Activated CD4-positive, alpha-beta T cell treated with anti-CD3 and anti-CD28 coated beads, Interleukin-2, amount 10 ng/mL, durations not matched to agents 24 days and 14 days (primary cell): ENCODE measurements at regions of chr7 and their contacts with region 1.

Region 1: GRCh38 chr7:80134536-80135320 is at the start of gene GNAI1:
- DNase-seq: peak; percentile 74
- H3K4me3 Mint-ChIP-seq: peak within 1 kb of the TSS; percentile 86
- H3K27ac Mint-ChIP-seq: peak within 1 kb of the TSS; percentile 83
- H3K4me1 Mint-ChIP-seq: peaks cover 27% of the 10 kb centered on the region
- H3K27me3 Mint-ChIP-seq: peaks cover 59% of the 10 kb centered on the region
- total RNA-seq, gene GNAI1: 5.7 and 6.8 TPM in 2 replicates

Region 2: DNA sequence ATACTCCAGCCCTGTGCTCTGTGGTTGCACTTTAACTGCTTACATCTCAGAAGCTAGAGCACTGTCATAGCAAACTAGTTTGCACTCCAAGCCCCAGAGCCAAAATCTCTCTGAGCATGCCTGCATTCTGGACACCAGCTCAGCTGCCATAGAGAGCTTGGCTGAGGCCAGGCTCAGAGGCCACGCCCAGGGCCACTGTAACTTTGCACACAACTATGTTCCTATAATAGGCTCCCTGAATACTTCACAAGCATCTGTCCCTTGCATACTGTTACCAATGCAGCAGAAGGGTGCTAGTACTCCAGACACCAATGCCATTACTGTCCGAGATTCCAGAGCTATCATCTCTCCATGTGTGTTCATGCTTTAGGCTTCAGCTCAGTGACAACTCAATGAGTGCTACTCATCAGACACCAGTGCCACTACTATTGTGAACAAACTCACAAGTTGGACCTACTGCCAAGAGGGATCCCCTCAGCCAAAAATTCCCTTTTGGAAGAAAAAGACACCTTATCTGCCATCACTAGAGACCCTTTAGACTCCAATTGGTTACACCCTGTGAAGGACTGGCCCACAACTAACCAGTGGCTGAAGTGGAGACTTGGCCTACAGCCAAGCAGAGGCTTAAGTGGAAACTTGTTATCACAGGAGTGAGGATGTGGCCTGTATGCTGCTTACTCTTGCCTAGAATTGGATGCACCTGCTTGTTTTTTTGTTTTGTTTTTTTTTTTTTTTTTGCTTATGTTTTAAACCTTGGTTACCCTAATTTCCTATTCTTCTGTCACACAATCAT is 469.6 kb before region 1 on chr7:
- intact Hi-C with region 1: no loop called
- DNase-seq: no peak
- H3K4me3 Mint-ChIP-seq: no peak overlapping the region
- H3K27ac Mint-ChIP-seq: no peak overlapping the region
- H3K4me1 Mint-ChIP-seq: no peaks in the 10 kb centered on the region
- H3K27me3 Mint-ChIP-seq: no peaks in the 10 kb centered on the region

Region 3: DNA sequence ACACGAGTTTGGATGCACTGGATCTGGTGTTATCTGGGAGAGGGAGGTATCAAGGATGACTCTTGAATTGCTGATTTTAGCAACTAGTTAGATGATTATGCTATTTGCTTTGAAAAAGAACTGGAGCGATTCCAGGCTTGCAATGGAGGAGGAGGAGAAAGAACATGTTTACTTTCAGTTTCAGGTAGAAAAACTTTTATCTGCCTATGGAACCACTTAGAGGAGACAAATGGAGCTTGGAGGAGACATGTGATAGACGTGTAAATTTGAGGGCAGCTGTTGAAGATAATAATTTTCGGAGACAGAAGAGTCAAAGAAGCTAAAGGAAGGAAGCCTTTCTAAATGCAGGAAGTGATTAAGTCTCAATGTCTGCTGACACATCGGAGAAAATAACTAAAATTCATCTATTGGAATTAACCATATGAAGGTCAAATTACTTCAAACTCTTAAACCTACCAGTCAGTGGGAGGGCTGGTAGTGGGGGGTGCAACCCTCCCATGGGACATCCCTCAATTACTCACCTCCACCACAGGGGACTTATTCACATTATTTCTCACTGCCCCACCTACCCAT is 56.5 kb before region 1 on chr7:
- intact Hi-C with region 1: loop called (anchors 1 kb)
- DNase-seq: peak; percentile 56
- H3K4me3 Mint-ChIP-seq: peak overlapping the region; percentile 75
- H3K27ac Mint-ChIP-seq: peak overlapping the region; percentile 55
- H3K4me1 Mint-ChIP-seq: peaks cover 10% of the 10 kb centered on the region
- H3K27me3 Mint-ChIP-seq: no peaks in the 10 kb centered on the region

Region 4: GRCh38 chr7:80151274-80151665 is 16.5 kb after region 1 on chr7:
- intact Hi-C with region 1: loop called (anchors 1 kb)
- DNase-seq: peak; percentile 65
- H3K4me3 Mint-ChIP-seq: peak overlapping the region; percentile 25
- H3K27ac Mint-ChIP-seq: peak overlapping the region; percentile 78
- H3K4me1 Mint-ChIP-seq: peaks cover 14% of the 10 kb centered on the region
- H3K27me3 Mint-ChIP-seq: peaks cover 19% of the 10 kb centered on the region

Region 5: DNA sequence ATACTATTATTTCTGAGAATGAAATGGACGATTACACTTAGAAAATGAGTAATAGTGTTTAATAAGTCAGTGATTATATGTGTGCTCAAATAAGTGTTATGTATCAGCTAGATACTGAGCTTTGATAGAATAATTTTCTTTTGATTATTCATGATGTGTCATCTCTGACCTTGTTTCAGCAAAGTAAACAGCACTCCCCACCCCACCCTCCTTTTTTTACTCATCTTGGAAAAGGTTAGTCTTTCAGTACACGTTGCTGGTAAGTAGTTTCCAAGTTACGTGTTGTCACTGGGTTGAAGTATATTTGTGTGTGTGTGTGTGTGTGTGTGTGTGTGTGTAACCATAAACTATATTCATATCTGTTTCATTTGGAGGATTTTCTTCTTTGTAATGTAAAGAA is 84.0 kb after region 1 on chr7:
- intact Hi-C with region 1: loop called (anchors 1 kb)
- DNase-seq: no peak
- H3K4me3 Mint-ChIP-seq: no peak overlapping the region
- H3K27ac Mint-ChIP-seq: no peak overlapping the region
- H3K4me1 Mint-ChIP-seq: peaks cover 9% of the 10 kb centered on the region
- H3K27me3 Mint-ChIP-seq: no peaks in the 10 kb centered on the region

Region 6: DNA sequence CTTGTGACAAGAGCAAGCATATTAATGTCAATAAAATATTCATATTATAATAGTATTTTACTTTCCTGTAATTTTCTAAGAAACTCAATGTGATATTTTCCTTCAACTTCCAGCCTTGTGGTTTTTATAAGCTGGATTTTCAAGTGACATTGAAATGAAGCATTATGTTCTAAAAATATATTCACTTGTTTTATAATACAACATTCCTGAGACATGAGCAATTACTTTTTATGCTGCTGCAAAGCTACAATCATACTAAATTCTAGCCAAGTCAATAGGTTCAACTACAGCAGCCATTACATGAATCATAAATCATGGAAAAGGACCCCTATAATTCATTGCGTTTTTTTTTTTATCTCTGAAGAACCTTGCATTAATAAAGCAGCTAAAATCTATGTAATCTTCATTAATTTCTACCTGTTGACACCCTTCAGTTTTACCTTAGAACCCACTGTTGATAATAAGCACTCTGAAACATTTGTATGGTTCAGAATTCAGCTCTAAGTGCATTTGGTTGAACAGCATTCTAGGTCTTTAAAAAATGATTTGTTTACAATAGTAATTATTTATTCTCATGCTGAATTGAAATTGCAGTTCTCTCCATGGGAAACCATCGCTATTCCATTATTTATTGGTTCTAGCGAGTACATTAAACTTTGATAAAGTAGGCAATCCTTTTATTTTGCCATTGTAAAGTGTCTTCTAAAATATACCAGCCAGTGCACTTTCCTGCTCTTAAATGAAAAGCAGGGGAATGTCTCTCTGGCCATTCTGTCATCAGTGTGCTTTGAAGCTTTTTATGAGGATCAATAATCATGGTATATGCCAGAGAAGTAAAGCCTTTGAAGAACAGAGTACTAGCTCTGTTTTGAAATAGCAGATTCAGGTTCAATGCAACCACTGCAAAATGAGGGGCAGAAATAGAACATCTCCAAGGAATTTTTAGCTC is 244.6 kb after region 1 on chr7:
- intact Hi-C with region 1: no loop called
- DNase-seq: no peak
- H3K4me3 Mint-ChIP-seq: no peak overlapping the region
- H3K27ac Mint-ChIP-seq: no peak overlapping the region
- H3K4me1 Mint-ChIP-seq: no peaks in the 10 kb centered on the region
- H3K27me3 Mint-ChIP-seq: no peaks in the 10 kb centered on the region

Region 7: GRCh38 chr7:80392229-80393169 is 257.8 kb after region 1 on chr7:
- intact Hi-C with region 1: loop called (anchors 10 kb)
- DNase-seq: no peak
- H3K4me3 Mint-ChIP-seq: no peak overlapping the region
- H3K27ac Mint-ChIP-seq: no peak overlapping the region
- H3K4me1 Mint-ChIP-seq: no peaks in the 10 kb centered on the region
- H3K27me3 Mint-ChIP-seq: no peaks in the 10 kb centered on the region